Caco-2 (cell line): ENCODE measurements at regions of chr3 and their contacts with region 1.

Region 1: GRCh38 chr3:125055913-125056745 is at the start of gene HEG1:
- DNase-seq: peak; percentile 85 to 90
- H3K4me3 ChIP-seq: peak within 1 kb of the TSS; percentile 64
- H3K4me3 Mint-ChIP-seq: peak within 1 kb of the TSS; percentile 84
- H3K27ac Mint-ChIP-seq: peak within 1 kb of the TSS; percentile 33
- H3K4me1 ChIP-seq: peaks cover 64% of the 10 kb centered on the region
- H3K4me1 Mint-ChIP-seq: peaks cover 49% of the 10 kb centered on the region
- H3K27me3 ChIP-seq: no peaks in the 10 kb centered on the region
- H3K27me3 Mint-ChIP-seq: no peaks in the 10 kb centered on the region
- CTCF ChIP-seq: no peak
- total RNA-seq, gene HEG1: 51.8 and 69.8 TPM in 2 replicates

Region 2: DNA sequence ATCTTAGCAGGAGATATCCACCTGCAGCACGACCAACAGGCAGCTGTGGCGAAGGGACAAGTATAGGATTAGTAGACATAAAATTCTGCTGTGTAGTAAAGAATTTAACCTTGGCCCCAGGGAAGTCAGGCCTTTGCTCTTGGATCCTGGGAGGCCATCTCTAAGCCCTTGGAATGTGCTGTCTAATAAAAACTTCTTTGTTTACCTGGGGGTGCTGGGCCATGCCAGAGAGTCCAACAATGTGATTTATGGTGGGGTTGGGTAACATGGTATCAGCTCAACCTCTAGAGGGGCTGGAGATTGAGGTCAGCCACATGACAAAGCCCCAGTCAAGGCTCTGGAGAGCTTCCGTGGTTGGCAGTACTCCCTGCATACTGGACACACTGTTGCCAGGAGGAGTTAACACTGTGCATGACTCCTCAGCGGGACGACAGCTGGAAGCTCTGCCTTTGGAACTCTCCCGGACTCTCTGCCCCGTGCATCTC is 52.7 kb before region 1 on chr3:
- CTCF ChIA-PET with region 1: no interaction called
- POLR2A ChIA-PET with region 1: no interaction called
- intact Hi-C with region 1: loop called (anchors 2 kb)
- DNase-seq: peak; percentile 88 to 91
- H3K4me3 ChIP-seq: no peak overlapping the region
- H3K4me3 Mint-ChIP-seq: peak overlapping the region; percentile 17
- H3K27ac Mint-ChIP-seq: peak overlapping the region; percentile 38
- H3K4me1 ChIP-seq: peaks cover 42% of the 10 kb centered on the region
- H3K4me1 Mint-ChIP-seq: peaks cover 23% of the 10 kb centered on the region
- H3K27me3 ChIP-seq: no peaks in the 10 kb centered on the region
- H3K27me3 Mint-ChIP-seq: no peaks in the 10 kb centered on the region
- CTCF ChIP-seq: peak in 1 of 2 experiments; percentile 4